HepG2 (cell line): ENCODE measurements at regions of chr1 and their contacts with region 1.

Region 1: DNA sequence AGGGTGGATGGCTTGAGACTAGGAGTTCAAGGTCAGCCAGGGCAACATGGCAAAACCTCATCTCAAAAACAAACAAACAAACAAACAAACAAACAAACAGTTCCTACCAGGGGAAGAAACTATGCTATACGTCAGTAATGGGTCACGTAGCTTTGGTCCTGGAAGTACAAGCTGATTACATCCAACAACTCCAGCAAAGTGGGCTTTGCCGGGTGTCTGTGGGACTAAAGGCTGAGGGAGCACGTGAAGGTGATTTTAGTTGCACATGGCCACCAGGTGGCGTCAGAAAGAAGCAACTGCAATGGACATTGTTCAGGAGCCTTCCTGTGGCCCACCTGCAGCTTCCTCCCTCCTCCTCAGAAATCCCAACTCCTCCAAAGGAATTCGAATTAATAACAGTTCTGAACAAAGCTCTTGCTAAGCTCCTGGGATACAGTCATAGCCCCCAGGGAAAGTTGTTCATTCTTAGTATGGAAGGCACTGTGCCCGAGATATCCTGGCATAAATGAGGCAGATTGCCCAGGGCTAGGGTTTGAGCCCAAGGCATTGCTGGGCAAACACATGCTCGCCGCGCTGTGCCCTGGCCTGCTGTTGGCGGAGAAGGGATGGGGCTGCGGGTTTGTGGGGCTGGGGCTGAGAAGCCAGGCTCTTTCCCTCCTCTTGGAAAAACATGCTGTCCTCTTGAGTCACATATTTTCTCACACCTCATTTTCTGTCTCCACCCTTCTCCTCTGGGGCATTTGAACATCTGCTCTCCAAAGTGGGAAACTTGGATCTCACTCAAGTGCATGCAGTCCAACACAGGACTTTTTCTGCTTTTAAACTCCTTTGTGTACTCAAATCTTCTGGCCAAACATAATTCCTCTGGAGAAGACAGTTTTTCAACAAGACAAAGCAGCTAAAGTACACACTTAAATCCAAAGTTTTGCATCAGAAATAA is 28.6 kb downstream of the AKNAD1 start:
- DNase-seq: peak; percentile 67
- ATAC-seq: peak; percentile 85
- H3K4me3 ChIP-seq: no peak overlapping the region
- H3K27ac ChIP-seq: no peak overlapping the region
- H3K4me1 ChIP-seq: peaks cover 35% of the 10 kb centered on the region
- H3K27me3 ChIP-seq: peaks cover 0 to 4% of the 10 kb centered on the region in 2 experiments; a peak in 2 of 5 replicates
- CTCF ChIP-seq: peak; percentile 85
- EP300 ChIP-seq: no peak
- POLR2A ChIP-seq: no peak
- RAD21 ChIP-seq: peak; percentile 66

Region 2: DNA sequence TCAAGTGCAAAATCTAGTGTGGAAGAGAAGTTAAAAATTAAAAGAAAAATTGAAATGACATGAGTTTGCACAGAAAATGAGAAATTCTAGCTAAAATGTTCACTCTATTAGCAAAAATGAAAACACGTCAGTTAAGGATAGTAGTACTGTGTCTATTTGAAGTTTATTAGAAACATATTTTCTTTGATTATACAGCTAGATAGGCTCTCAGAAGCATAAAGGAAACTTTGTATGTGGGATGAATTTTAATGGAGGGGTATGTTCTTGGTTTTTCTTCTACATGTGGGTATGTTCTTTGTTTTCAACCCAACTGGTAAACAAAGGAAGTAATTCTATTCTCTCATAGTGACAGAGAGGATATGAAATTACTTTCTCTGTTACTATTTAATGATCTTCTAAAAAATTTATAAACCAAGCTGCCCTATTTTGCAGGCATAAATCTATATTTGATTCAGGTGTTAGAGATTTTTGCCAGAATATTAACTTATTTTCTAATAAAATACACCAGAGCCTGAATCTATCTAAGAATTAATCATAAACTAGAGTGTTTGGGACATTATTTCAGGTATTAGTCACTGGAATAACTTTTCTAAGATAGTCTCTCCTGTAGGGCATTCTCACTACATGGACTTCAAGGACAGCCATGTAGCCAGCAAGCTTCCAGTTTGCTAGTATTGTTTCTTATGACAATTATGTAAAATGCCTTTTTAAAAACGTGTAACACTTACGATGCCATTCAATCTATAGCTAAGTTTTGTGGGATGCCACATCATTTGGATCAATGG is 64.3 kb after region 1 on chr1:
- CTCF ChIA-PET with region 1: interaction called, 66 read pairs
- POLR2A ChIA-PET with region 1: interaction called, 3 read pairs
- in situ Hi-C with region 1: loop called (anchors 5 kb)
- intact Hi-C with region 1: no loop called
- DNase-seq: no peak
- ATAC-seq: no peak
- H3K4me3 ChIP-seq: no peak overlapping the region
- H3K27ac ChIP-seq: no peak overlapping the region
- H3K4me1 ChIP-seq: peaks cover 16% of the 10 kb centered on the region
- H3K27me3 ChIP-seq: no peaks in the 10 kb centered on the region
- CTCF ChIP-seq: no peak
- EP300 ChIP-seq: no peak
- POLR2A ChIP-seq: no peak
- RAD21 ChIP-seq: no peak

Region 3: DNA sequence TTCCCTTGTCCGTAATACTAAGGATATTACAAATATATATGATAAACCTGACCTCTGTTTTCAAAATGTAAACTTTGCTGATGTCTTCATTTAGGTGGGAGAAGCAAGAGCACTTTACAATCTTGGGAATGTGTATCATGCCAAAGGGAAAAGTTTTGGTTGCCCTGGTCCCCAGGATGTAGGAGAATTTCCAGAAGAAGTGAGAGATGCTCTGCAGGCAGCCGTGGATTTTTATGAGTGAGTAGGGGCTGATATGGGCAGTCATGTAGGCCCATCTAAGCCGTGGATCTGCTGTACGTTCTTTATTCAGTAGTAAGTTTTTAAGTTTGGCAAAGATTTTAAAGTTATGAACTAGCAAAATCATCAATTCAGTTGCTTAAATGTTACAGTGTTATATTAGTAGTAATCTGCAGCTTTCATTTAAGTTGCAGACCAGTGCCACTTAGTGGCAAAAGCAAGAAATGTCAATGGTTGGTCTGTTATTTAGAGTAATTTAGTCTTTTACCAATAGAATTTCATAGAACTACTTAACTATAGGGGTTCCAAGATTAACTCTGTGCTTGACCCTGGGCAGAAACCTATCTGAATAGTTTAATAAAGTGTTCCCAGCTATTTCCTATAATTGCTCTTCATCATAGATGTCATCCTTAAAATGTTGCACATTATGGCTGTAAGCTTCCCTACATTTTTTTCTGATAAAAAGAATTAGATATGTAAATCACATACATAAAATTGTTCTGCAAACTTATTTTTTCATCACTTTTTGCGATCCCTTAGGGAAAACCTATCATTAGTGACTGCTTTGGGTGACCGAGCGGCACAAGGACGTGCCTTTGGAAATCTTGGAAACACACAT is 69.8 kb after region 1 on chr1:
- CTCF ChIA-PET with region 1: interaction called, 66 read pairs
- POLR2A ChIA-PET with region 1: no interaction called
- in situ Hi-C with region 1: loop called (anchors 5 kb)
- intact Hi-C with region 1: loop called (anchors 1 kb)
- DNase-seq: peak; percentile 60
- ATAC-seq: peak; percentile 70
- H3K4me3 ChIP-seq: no peak overlapping the region
- H3K27ac ChIP-seq: no peak overlapping the region
- H3K4me1 ChIP-seq: no peaks in the 10 kb centered on the region
- H3K27me3 ChIP-seq: no peaks in the 10 kb centered on the region
- CTCF ChIP-seq: peak; percentile 67
- EP300 ChIP-seq: no peak
- POLR2A ChIP-seq: no peak
- RAD21 ChIP-seq: peak; percentile 56